AG04450 (cell line): ENCODE measurements at regions of chr11 and their contacts with region 1.

Region 1: GRCh38 chr11:17077520-17078401 is at the start of gene RPS13:
- DNase-seq: peak; percentile 94
- H3K4me3 ChIP-seq: peak within 1 kb of the TSS; percentile 99
- H3K27ac ChIP-seq: peak within 1 kb of the TSS; percentile 86
- H3K27me3 ChIP-seq: no peaks in the 10 kb centered on the region
- CTCF ChIP-seq: no peak
- polyA plus RNA-seq, gene RPS13: 919 and 986 TPM in 2 replicates

Region 2: DNA sequence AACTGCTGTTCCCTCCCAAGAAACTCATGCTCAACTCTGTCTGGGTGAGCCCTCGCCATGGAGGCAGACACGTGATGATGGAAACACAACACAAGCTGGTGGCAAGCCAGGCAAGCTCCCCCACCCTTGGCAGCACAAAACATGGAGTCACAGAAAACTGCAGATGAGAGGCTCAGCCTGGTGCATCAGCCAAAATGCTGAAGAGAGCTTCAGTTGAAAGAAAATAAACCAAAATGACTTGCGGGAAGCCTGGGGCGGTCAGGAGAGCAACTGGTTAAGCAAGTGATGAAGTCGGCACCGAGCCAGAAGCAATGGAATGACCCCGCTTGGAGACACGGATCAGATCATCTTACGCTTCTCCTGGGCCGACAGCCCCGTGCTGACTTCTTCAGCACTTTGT is 271.0 kb before region 1 on chr11:
- CTCF ChIA-PET with region 1: no interaction called
- POLR2A ChIA-PET with region 1: no interaction called
- DNase-seq: peak; percentile 29
- H3K4me3 ChIP-seq: no peak overlapping the region
- H3K27ac ChIP-seq: no peak overlapping the region
- H3K27me3 ChIP-seq: peaks cover 25% of the 10 kb centered on the region
- CTCF ChIP-seq: no peak

Region 3: DNA sequence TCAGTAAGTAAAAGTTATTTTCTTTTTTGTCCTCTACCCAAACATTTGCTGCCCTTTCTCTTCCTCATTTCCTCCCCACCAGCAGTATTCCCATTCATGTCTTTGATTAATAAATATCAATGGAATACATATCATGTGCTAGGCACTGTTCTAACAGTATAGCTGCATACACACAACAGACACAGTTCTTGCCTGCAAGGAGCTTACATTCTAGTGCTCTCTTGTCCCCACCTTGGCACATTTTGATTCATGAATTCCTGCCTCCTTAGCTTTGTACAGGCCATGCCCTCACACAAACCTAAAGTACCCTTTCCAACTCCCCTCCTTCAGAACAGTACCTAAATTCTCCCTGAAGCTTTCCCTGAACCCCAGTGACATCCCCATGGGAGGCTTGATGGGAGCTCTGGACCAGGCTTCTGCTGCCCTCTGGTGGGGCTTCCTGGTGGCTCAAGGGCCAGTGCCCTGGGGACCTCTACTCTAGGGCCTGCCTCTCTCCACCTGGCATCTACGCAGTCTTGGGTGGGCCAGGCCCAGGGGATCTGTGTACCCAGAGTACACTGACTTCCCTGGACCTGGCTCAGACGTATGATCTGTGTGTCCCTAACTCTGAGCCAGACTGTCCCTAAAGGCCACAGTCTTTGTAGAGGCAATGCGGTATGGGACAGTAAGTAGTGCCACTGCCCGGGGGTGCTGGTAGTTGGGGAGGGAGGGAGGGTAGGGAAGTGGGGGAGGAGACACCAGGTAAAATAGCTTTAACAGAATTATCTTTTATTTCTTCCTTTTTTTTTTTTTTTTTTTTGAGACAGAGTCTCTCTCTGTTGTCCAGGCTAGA is 14.4 kb before region 1 on chr11:
- CTCF ChIA-PET with region 1: interaction called, 10 read pairs
- POLR2A ChIA-PET with region 1: interaction called, 4 read pairs
- DNase-seq: no peak
- H3K4me3 ChIP-seq: no peak overlapping the region
- H3K27ac ChIP-seq: no peak overlapping the region
- H3K27me3 ChIP-seq: no peaks in the 10 kb centered on the region
- CTCF ChIP-seq: peak; percentile 77

Region 4: DNA sequence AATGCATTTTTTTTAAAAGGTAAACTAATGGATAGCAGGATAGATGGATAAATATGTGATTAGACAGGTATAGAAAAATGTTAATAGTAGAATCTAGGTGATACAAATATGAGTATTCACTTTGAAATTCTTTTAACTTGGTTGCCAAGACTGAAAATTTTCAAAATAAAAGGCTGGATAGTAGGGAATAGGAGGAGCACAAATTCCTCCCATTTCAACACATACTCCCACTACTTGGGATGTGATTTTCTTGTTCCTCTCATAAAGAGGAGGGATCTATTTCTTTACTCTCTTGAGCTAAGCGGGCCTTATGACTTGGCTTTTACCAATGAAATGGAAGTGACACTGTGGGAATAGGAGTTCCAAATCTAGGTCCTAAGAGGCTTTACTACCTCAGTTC is 94.2 kb after region 1 on chr11:
- CTCF ChIA-PET with region 1: no interaction called
- POLR2A ChIA-PET with region 1: interaction called, 11 read pairs
- DNase-seq: no peak
- H3K4me3 ChIP-seq: no peak overlapping the region
- H3K27ac ChIP-seq: no peak overlapping the region
- H3K27me3 ChIP-seq: no peaks in the 10 kb centered on the region
- CTCF ChIP-seq: no peak

Region 5: DNA sequence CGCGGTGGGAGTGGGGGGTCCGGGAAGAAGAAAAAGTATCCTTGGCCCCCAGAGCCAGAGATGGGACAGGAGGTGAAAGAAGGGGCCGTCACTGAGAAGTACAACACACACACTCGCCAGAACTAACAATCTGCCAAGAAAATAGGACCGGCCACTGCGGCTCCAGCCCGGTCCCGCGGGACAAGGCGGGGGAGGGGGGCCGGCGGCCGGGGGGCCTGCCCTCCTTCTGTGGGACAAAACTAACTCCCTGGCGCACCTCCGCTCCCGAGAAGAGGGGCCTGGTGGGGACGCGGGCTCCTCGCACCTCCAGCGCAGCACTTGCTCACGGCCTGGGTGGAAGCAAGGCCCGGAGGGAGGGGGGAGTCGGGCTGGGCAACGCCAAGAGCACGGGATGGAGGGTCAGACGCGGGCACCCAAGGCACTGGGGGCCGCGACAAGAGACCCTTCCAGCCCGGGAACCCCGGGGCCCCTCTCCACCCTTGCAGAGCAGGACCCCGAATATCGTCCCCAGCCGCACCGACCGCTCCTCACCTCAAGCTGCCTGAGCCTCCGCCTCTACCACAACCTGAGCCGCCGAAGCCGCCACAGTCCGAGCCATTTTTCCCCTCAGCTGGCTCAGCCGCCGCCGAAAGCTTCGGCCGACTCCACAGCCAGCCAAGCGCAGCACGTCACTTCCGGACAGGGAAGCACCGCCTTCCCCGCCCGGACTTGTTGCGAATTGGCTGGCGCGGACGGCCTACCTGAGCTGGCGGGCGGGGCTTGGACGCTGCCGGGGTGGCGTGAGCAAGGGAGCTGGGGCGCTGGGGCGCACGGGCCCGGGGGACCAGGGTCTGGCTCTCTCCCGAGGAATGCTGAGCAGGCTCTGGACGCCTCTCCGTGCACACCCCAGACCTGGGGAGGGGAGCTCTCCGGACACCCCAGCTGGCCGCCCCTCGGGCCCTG is 129.8 kb after region 1 on chr11 and contains the start of gene PIK3C2A:
- CTCF ChIA-PET with region 1: no interaction called
- POLR2A ChIA-PET with region 1: interaction called, 11 read pairs
- DNase-seq: peak; percentile 61
- H3K4me3 ChIP-seq: peak within 1 kb of the TSS; percentile 93
- H3K27ac ChIP-seq: peak within 1 kb of the TSS; percentile 93
- H3K27me3 ChIP-seq: no peaks in the 10 kb centered on the region
- CTCF ChIP-seq: no peak
- polyA plus RNA-seq, gene PIK3C2A: 25.1 and 42.3 TPM in 2 replicates

Region 6: DNA sequence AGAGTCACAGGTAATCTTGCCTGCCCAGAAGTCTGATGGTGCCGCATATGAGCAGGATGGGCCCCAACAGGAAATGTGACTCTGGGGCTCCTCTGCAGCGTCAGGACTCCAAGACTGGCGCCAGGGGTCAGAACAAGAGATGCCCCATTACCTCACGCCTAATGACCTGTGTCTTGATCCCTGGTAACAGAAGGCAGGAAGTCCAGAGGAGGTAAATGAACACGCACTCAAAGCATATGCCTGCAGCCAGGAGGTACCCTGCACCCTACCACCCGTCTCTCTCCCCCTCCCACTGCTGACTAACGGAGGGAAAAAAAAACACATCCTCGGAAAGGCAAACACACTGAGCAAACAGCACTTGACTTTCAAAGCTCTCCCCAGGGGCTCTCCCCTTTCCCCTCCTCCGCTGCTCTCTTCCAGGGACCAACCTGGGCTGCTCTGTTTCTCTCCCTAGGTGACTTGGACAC is 361.6 kb after region 1 on chr11:
- CTCF ChIA-PET with region 1: no interaction called
- POLR2A ChIA-PET with region 1: no interaction called
- DNase-seq: no peak
- H3K4me3 ChIP-seq: no peak overlapping the region
- H3K27ac ChIP-seq: no peak overlapping the region
- H3K27me3 ChIP-seq: peaks cover 18% of the 10 kb centered on the region
- CTCF ChIP-seq: no peak

Region 7: DNA sequence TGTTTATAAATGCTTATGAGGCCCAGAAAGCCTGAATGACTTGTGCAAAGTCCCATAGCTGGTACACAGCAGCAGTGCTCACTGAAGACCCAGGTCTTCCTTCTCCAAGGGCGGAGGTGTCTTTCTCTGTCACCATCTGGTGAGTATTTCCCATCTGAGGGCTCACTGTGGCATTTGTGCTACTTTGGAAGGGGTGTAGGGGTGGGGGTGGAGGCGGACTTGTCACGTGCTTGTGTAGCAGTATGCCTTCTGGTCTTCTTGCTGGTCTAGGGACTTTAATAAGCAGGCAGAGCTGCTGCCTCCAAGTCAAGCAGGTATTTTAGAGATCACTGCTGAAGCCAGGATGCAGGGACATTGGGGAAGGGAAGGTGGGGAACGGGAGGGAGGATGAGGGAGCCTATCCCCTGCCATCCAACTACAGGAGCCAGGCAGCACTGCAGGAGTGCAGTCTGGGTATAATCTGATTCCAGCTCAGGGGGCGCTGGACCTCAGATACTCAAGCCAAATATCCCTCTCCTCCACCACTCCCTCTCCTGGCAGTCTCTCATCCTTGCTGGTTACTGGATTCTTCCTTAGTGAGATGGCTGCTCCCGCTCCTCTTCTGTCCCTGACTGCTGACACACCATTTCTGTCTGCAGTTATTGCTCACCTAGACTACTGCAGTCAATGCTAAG is 395.4 kb after region 1 on chr11:
- CTCF ChIA-PET with region 1: no interaction called
- POLR2A ChIA-PET with region 1: no interaction called
- DNase-seq: no peak
- H3K4me3 ChIP-seq: no peak overlapping the region
- H3K27ac ChIP-seq: no peak overlapping the region
- H3K27me3 ChIP-seq: peaks cover 29% of the 10 kb centered on the region
- CTCF ChIP-seq: peak; percentile 30